Posterior cingulate gyrus (tissue), 11 donors: ENCODE measurements at regions of chr2 and their contacts with region 1.

Region 1: GRCh38 chr2:178280244-178280852 is 86.0 kb downstream of the OSBPL6 start:
- DNase-seq: peak in 1 of 10 donors; percentile 19

Region 2: GRCh38 chr2:178128836-178129630 is 151.3 kb before region 1 on chr2:
- intact Hi-C with region 1: loop called (anchors 5 kb)
- DNase-seq: no peak

Region 3: GRCh38 chr2:178152033-178152432 is 128.3 kb before region 1 on chr2:
- intact Hi-C with region 1: no loop called
- DNase-seq: no peak

Region 4: GRCh38 chr2:178644933-178645332 is 364.6 kb after region 1 on chr2:
- intact Hi-C with region 1: no loop called
- DNase-seq: no peak